ENCODE measurements at regions of chr12 and their contacts with region 1.

Region 1: DNA sequence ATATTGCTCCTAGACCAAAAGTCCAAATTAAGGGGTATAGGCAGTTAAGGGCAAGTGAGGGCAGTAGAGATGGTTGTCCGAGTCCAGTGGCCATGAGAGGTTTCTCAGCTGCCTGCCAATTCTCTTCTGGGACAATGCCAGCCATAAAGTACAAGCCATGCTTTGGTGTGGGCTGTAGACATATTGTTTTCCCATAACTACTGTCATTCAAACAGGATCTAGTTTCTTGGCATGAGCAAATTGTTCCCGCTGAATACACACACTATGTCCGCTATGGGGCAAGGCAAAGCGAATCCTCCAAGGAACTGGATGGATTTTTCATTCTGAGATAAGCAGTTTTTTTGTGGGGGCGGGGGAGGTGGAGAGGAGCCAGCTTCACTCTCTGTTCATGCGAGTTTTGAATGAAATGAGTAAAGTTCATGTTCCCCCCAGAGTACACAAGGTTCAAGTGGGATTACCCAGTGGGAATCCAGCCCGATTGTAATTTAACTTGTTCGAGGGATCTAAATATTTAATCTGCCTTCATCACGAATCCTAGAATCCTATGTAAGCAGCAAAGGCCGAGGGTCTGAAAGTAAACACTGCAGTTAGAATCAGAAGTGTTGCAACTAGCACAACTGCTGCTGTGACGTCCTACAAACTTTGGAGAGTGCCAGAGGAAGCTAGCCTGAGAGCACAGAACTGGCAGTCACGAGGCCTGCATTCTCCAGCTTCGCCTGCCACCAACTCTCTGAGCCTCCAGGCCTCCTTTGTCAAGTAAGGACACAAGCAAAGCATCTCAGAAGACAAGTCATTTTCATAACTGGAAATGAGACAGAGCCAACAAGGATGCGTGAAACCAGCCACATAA is 137.0 kb downstream of the CRADD start:
- DNase-seq: peak; percentile 74 to 86
- ATAC-seq: peak; percentile 80 to 94 (median 90)
- H3K4me3 ChIP-seq: peak overlapping the region in 7 of 10 donors; percentile 1 to 29 (median 18)
- H3K27ac ChIP-seq: peak overlapping the region; percentile 80 to 96 (median 90)
- H3K4me1 ChIP-seq: peaks cover 25 to 73% (median 62%) of the 10 kb centered on the region in 9 donors
- H3K27me3 ChIP-seq: no peaks in the 10 kb centered on the region
- CTCF ChIP-seq: peak in 3 of 9 donors; percentile 11 to 26 (median 12)

Region 2: DNA sequence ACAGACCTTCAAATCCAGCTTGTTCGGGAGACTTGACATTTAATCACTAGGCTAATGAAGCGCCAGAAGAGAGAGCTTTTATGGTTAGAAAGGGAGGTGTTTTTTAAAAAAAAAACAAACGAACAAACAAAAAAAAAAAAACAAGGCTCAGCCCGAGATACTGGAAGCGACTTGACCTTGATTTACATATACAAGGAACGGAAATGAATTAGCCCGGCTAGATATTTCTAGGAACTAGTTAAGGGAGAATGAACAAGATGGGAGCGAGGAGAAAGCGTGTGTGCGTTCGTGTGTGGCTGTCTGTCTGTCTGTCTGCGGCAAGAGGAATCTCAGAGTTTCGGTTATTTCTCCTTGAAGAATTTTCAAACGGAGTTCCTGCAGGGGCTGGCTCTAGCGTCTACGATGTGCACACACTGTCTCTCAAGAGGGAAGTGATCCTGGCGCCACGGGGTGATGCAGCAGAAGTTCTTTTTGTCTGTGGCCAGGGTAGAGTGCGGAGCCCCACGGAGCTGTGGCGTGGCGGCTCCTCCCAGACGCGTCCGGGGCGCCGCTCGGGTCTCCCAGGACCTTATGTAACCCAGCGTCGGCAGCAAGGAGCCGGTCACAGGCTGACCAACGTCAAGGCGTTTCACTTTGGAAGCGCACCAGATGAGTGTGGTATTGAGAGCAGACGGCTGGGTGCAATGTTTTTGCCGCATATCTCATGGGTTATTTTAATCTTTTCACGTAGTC is 222.9 kb before region 1 on chr12:
- intact Hi-C with region 1: loop called in 1 of 10 experiments (anchors 5 kb)
- DNase-seq: peak; percentile 81 to 86
- ATAC-seq: peak; percentile 93 to 98 (median 94)
- H3K4me3 ChIP-seq: peak overlapping the region; percentile 22 to 67 (median 60)
- H3K27ac ChIP-seq: peak overlapping the region; percentile 71 to 95 (median 88)
- H3K4me1 ChIP-seq: peaks cover 0 to 45% (median 36%) of the 10 kb centered on the region in 9 donors
- H3K27me3 ChIP-seq: peaks cover 0 to 35% (median 0%) of the 10 kb centered on the region in 7 donors
- CTCF ChIP-seq: no peak

Region 3: DNA sequence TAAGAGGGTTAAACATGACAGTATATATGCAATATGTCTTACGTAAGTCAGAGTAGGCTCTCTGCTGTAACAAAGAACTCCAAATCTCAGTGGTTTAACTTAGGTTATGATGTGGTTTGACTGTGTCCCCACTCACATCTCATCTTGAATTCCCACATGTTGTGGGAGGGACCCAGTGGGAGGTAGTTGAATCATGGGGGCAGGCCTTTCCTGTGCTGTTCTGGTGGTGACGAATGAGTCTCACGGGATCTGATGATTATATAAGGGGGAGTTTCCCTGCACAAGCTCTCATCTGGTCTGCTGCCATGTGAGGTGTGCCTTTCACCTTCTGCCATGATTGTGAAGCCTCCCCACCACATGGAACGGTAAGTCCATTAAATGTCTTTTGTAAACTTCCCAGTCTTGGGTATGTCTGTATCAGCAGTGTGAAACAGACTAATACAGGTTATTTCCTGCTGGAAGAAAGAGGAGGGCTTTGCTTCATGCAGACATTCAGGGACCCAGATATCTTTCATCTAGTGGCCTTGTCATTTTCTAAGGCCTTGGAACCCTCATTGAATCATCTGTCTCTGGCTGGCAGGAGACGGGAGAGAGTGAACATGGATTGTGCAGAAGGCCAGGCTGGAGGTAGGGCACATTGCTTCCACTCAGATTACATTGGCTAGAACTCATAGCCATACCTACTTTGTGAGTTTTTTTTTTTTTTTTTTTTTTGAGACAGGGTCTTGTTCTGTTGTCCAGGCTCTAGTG is 40.9 kb before region 1 on chr12:
- intact Hi-C with region 1: loop called in 4 of 10 experiments (anchors 2 to 5 kb)
- DNase-seq: no peak
- ATAC-seq: peak in 4 of 8 donors; percentile 8 to 46 (median 20)
- H3K4me3 ChIP-seq: no peak overlapping the region
- H3K27ac ChIP-seq: peak overlapping the region in 1 of 10 donors; percentile 33
- H3K4me1 ChIP-seq: peaks cover 16 to 42% (median 36%) of the 10 kb centered on the region in 9 donors
- H3K27me3 ChIP-seq: no peaks in the 10 kb centered on the region
- CTCF ChIP-seq: no peak

Region 4: DNA sequence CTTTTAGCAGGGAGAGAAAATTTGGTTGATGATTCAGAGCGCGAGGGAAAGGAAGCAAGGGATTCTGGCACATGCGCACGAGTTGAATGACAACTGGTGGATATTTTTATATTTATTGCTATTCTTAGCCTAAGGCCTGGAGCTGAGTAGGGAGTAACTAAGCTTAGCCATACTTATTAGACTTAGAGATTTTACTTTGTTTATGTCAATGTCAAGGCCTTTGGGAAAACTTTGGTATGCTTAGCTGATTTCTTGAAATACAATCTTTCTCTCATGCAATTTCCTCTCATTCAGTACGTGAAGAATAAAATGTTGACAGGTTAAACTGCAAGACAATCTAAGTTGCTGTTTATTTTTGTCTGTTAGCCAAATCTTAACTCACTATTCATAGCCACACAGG is 35.9 kb before region 1 on chr12:
- intact Hi-C with region 1: loop called in 4 of 10 experiments (anchors 2 to 5 kb)
- DNase-seq: peak in 1 of 2 donors; percentile 82
- ATAC-seq: peak; percentile 78 to 96 (median 92)
- H3K4me3 ChIP-seq: peak overlapping the region in 3 of 10 donors; percentile 3 to 18 (median 10)
- H3K27ac ChIP-seq: peak overlapping the region; percentile 72 to 93 (median 87)
- H3K4me1 ChIP-seq: peaks cover 16 to 62% (median 50%) of the 10 kb centered on the region in 9 donors
- H3K27me3 ChIP-seq: no peaks in the 10 kb centered on the region
- CTCF ChIP-seq: no peak

Region 5: DNA sequence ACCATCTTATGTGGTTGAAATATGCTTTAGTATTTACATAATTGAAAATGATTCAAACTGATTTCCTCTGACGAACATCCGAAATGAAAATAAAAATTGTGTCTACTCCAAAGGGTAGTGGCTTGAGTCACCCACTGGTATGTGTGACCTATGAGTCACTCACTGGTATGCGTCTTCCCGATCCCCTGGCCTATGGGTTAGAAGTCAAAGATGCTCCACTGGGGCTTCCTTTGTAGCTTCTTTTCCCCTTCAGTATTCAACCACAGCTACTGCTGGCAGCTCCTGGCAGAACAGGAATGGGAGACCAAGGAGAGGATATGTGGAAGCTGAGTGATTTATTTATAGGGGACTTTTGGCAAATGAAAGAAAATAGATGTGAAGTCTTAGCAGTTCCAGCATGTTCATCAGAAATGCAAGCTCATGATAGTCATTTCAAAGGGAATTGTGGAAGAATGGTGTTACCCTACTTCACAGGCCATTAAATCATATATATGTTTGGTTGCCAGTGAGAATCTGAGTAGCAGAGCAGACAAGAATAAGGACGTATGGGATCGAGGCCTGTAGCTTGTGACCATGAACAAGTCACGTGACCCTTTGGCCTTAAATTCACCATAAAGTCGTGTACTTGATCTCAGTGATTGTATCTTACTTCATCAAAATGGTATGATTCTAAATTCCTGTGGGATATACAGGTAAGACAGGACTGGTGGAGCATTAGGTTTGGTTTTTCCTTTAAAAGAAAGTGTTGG is 28.8 kb before region 1 on chr12:
- intact Hi-C with region 1: loop called in 1 of 10 experiments (anchors 2 kb)
- DNase-seq: peak in 1 of 2 donors; percentile 64
- ATAC-seq: peak; percentile 86 to 98 (median 90)
- H3K4me3 ChIP-seq: peak overlapping the region in 1 of 10 donors; percentile 12
- H3K27ac ChIP-seq: peak overlapping the region; percentile 39 to 91 (median 84)
- H3K4me1 ChIP-seq: peaks cover 14 to 58% (median 49%) of the 10 kb centered on the region in 9 donors
- H3K27me3 ChIP-seq: no peaks in the 10 kb centered on the region
- CTCF ChIP-seq: no peak

Region 6: DNA sequence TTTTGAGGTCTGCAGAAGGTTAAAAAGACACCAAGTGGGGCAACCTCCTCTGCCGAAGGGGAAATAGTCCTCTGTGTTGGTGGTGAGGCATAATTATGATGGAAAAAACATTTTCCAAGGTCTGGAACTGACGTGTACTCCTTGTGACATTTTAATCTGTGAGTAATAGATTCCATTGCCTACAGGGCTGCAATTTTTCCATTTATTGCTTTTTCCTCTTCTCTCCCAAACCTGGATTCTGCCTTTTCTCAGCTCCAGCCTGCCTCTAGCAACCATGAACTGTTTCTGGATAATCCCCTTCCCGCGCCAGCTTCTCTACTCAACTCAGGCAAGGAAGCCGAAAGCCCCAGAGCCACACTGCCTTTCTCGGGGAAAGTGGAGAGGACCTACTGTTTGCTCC is 104.1 kb after region 1 on chr12:
- intact Hi-C with region 1: no loop called
- DNase-seq: no peak
- ATAC-seq: peak in 4 of 8 donors; percentile 16 to 74 (median 40)
- H3K4me3 ChIP-seq: no peak overlapping the region
- H3K27ac ChIP-seq: peak overlapping the region in 2 of 10 donors; percentile 24 to 35
- H3K4me1 ChIP-seq: peaks cover 0 to 20% (median 0%) of the 10 kb centered on the region in 9 donors
- H3K27me3 ChIP-seq: no peaks in the 10 kb centered on the region
- CTCF ChIP-seq: no peak